ENCODE measurements at regions of chr4 and their contacts with region 1.

Region 1: GRCh38 chr4:40333921-40334352 is 1.2 kb upstream of the CHRNA9 start:
- DNase-seq: peak; percentile 67 to 93
- H3K4me3 ChIP-seq: peak overlapping the region; percentile 5; the same call in 1 of the 2 replicates
- H3K27ac ChIP-seq: peak overlapping the region; percentile 93
- H3K4me1 ChIP-seq: peaks cover 41% of the 10 kb centered on the region
- H3K27me3 ChIP-seq: no peaks in the 10 kb centered on the region
- CTCF ChIP-seq: no peak

Region 2: GRCh38 chr4:39808231-39808749 is 525.6 kb before region 1 on chr4:
- CTCF ChIA-PET with region 1: no interaction called
- POLR2A ChIA-PET with region 1: interaction called, 15 read pairs
- intact Hi-C with region 1: no loop called
- DNase-seq: no peak
- H3K4me3 ChIP-seq: no peak overlapping the region
- H3K27ac ChIP-seq: no peak overlapping the region
- H3K4me1 ChIP-seq: no peaks in the 10 kb centered on the region
- H3K27me3 ChIP-seq: no peaks in the 10 kb centered on the region
- CTCF ChIP-seq: no peak

Measured in PC-9 (cell line).